Dorsolateral prefrontal cortex (tissue), 120 donors: ENCODE measurements at regions of chr9 and their contacts with region 1.

Region 1: GRCh38 chr9:95073021-95073607 is 244.4 kb downstream of the FANCC start:
- DNase-seq: no peak
- H3K4me3 ChIP-seq: no peak overlapping the region
- H3K27ac ChIP-seq: peak overlapping the region in 56 of 59 donors; percentile 2 to 100 (median 98)
- H3K27me3 ChIP-seq: no peaks in the 10 kb centered on the region
- CTCF ChIP-seq: peak in 28 of 56 donors; percentile 11 to 42 (median 28)

Region 2: DNA sequence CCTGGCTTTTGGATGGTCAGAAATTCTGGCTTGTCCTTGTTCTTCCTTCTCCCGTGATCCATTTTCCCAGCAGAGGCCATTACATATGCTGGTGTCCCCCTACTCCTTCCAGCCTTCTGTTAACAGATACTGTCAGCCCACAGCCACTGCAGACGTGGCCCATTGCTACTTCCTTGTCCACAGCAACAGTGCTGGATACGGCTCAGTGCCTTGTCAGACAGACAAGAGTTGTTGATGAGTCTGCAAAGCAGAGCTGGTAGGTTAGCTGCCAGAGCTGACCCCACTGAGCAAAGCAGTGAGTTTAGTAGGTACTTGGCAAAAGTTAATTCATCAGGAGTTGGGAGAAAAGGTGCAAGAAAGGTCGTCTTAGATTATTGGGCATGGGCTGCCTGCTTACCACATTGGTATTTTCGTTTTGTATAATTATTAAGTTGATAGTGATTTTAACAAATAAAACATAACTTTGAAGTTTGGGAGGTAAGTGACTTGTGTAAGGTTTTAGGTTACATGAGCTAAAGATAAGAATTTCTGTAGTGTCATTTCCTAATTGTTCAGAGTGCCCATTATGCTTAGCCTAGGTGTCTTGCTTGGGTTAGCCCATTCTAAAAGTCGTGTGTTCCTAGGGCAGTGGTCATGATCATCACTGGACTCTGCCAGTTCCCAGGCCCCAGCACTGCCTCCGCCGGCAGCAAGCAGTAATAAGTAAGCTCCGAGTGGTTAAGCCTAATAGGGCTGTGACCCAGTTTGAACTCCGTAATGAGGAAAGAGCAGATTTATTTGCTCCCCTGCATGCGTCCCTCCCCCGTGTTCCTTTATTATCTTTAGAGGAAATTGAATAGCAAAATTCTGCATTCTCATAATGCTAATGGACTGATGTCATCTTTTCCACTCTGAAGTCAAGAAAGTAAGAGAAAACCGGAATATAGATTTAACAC is 47.6 kb before region 1 on chr9:
- intact Hi-C with region 1: loop called in 1 of 2 experiments (anchors 5 kb)
- DNase-seq: peak in 2 of 10 donors; percentile 53 to 64
- H3K4me3 ChIP-seq: peak overlapping the region in 5 of 59 donors; percentile 2 to 25 (median 16)
- H3K27ac ChIP-seq: peak overlapping the region in 56 of 59 donors; percentile 0 to 98 (median 82)
- H3K27me3 ChIP-seq: no peaks in the 10 kb centered on the region
- CTCF ChIP-seq: peak in 32 of 56 donors; percentile 12 to 51 (median 32)